ENCODE measurements at regions of chr18 and their contacts with region 1.

Region 1: DNA sequence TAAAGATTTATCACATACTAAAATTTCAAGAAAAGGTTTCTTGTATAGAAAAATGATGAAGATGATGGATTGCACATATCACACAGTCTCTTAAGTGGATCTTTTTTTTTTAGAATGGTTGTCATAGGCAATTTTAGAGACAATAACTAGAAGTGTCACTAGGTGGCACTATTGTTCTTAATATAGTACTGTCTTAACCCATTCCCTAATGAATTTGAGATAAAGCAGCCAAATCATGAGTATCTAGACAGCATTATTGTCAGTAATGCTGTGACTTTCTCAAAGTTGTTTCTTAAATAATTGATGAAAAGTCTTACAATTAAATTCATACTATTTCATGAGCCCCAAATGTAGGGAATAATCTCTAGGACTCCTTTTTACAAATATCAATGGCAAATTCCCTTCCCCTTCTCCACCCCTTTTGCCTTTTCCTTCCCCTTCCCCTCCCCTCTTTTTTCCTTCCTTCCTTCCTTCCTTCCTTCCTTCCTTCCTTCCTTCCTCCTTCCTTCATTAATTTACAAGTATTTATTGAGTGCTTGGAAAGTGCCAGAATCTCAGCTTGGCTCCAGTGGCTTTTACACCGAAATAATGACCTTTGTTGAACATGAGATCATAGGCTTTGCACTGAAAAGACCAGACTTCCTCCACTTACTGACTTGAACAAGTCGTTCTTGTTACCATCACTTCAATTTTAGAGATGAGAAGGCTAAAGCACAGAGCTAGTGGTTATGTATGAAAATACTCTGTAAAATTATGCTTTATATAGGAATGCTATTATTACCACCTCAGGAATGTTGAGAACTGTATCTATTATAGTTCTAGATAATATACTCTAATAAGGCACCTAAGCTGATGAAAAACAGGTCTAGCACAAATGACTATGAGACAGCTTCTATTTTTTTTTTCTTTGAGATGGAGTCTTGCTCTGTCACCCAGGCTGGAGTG is 19.8 kb downstream of the MYL12B start:
- DNase-seq: no peak
- H3K4me3 ChIP-seq: no peak overlapping the region
- H3K27ac ChIP-seq: no peak overlapping the region
- H3K4me1 ChIP-seq: no peaks in the 10 kb centered on the region
- H3K27me3 ChIP-seq: no peaks in the 10 kb centered on the region
- CTCF ChIP-seq: peak; percentile 64 to 84

Region 2: GRCh38 chr18:3321133-3321812 is 39.5 kb after region 1 on chr18:
- intact Hi-C with region 1: no loop called
- DNase-seq: no peak
- H3K4me3 ChIP-seq: no peak overlapping the region
- H3K27ac ChIP-seq: no peak overlapping the region
- H3K4me1 ChIP-seq: no peaks in the 10 kb centered on the region
- H3K27me3 ChIP-seq: no peaks in the 10 kb centered on the region
- CTCF ChIP-seq: no peak

Region 3: GRCh38 chr18:3454365-3455089 is 172.8 kb after region 1 on chr18:
- intact Hi-C with region 1: loop called (anchors 5 kb)
- DNase-seq: no peak
- H3K4me3 ChIP-seq: peak overlapping the region; percentile 72 to 89
- H3K27ac ChIP-seq: peak overlapping the region; percentile 98 to 99
- H3K4me1 ChIP-seq: peaks cover 0 to 48% (median 25%) of the 10 kb centered on the region in 4 donors
- H3K27me3 ChIP-seq: no peaks in the 10 kb centered on the region
- CTCF ChIP-seq: peak; percentile 60 to 63

Region 4: GRCh38 chr18:3593904-3594661 is 312.4 kb after region 1 on chr18:
- intact Hi-C with region 1: loop called (anchors 5 kb)
- DNase-seq: peak; percentile 90 to 93
- H3K4me3 ChIP-seq: peak overlapping the region; percentile 47 to 57
- H3K27ac ChIP-seq: peak overlapping the region; percentile 88 to 90
- H3K4me1 ChIP-seq: peaks cover 0 to 50% (median 42%) of the 10 kb centered on the region in 4 donors
- H3K27me3 ChIP-seq: no peaks in the 10 kb centered on the region
- CTCF ChIP-seq: peak; percentile 83 to 92